ENCODE measurements at regions of chr5 and their contacts with region 1.

Region 1: GRCh38 chr5:55969956-55970355 is 24.8 kb downstream of the IL6ST start:
- DNase-seq: no peak
- H3K4me3 ChIP-seq: no peak overlapping the region
- H3K27ac ChIP-seq: no peak overlapping the region
- H3K4me1 ChIP-seq: 0 out of 2 replicates have a peak, but pooled peaks cover 2% of the 10 kb centered on the region
- H3K27me3 ChIP-seq: no peaks in the 10 kb centered on the region
- CTCF ChIP-seq: no peak

Region 2: GRCh38 chr5:57243286-57244137 is 1273.6 kb after region 1 on chr5:
- CTCF ChIA-PET with region 1: no interaction called
- POLR2A ChIA-PET with region 1: interaction called, 12 read pairs
- intact Hi-C with region 1: no loop called
- DNase-seq: no peak
- H3K4me3 ChIP-seq: no peak overlapping the region
- H3K27ac ChIP-seq: peak overlapping the region; percentile 25; the same call in 1 of the 2 replicates
- H3K4me1 ChIP-seq: no peaks in the 10 kb centered on the region
- H3K27me3 ChIP-seq: no peaks in the 10 kb centered on the region
- CTCF ChIP-seq: no peak

Measured in PC-9 (cell line).